ENCODE measurements at regions of chr20 and their contacts with region 1.

Region 1: GRCh38 chr20:58433764-58434163 is 44.7 kb downstream of the VAPB start:
- DNase-seq: no peak
- H3K4me3 Mint-ChIP-seq: no peak overlapping the region
- H3K27ac Mint-ChIP-seq: no peak overlapping the region
- H3K4me1 Mint-ChIP-seq: peaks cover 59% of the 10 kb centered on the region
- H3K27me3 Mint-ChIP-seq: no peaks in the 10 kb centered on the region
- CTCF ChIP-seq: no peak

Region 2: DNA sequence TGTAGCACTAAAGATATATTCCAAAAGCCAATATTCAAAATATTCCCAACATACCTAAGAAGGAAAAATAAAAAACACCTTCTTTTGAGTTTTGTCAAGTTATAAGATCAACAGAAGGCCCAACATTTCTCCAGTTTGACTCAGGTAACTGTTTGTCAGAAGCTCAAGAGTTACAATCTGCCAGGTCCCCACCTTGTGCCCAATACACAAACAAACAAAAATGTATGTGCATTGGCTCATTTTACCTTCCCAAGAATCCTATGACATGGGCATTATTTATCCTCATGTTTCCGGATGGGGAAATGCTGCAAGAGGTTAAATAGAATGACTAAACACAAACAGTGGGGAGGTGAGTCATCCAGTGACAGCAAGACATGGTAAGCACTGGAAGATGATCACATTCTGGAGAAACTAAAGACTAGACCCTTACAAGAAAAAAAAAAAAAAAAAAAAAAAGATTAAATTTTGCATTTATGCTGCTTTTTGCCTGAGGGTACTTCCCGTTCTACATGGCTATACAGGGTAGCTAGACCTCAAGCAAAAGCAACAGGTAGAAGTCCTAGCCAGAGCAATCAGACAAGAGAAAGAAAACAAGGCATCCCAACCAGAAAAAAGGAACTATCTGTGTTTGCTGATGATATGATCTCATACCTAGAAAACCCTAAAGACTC is 181.7 kb before region 1 on chr20:
- CTCF ChIA-PET with region 1: interaction called, 7 read pairs
- intact Hi-C with region 1: loop called (anchors 10 kb)
- DNase-seq: peak; percentile 58
- H3K4me3 Mint-ChIP-seq: no peak overlapping the region
- H3K27ac Mint-ChIP-seq: peak overlapping the region; percentile 76
- H3K4me1 Mint-ChIP-seq: peaks cover 29% of the 10 kb centered on the region
- H3K27me3 Mint-ChIP-seq: no peaks in the 10 kb centered on the region
- CTCF ChIP-seq: no peak

Region 3: GRCh38 chr20:58306421-58307276 is 127.1 kb before region 1 on chr20:
- CTCF ChIA-PET with region 1: no interaction called
- intact Hi-C with region 1: loop called (anchors 1 kb)
- DNase-seq: peak; percentile 77
- H3K4me3 Mint-ChIP-seq: peak overlapping the region; percentile 91
- H3K27ac Mint-ChIP-seq: peak overlapping the region; percentile 68
- H3K4me1 Mint-ChIP-seq: peaks cover 21% of the 10 kb centered on the region
- H3K27me3 Mint-ChIP-seq: no peaks in the 10 kb centered on the region
- CTCF ChIP-seq: no peak

Region 4: GRCh38 chr20:58518387-58518786 is 84.6 kb after region 1 on chr20:
- CTCF ChIA-PET with region 1: no interaction called
- intact Hi-C with region 1: no loop called
- DNase-seq: no peak
- H3K4me3 Mint-ChIP-seq: no peak overlapping the region
- H3K27ac Mint-ChIP-seq: no peak overlapping the region
- H3K4me1 Mint-ChIP-seq: peaks cover 15% of the 10 kb centered on the region
- H3K27me3 Mint-ChIP-seq: peaks cover 83% of the 10 kb centered on the region
- CTCF ChIP-seq: no peak

Region 5: GRCh38 chr20:58555078-58555765 is 121.5 kb after region 1 on chr20:
- CTCF ChIA-PET with region 1: no interaction called
- intact Hi-C with region 1: no loop called
- DNase-seq: no peak
- H3K4me3 Mint-ChIP-seq: no peak overlapping the region
- H3K27ac Mint-ChIP-seq: no peak overlapping the region
- H3K4me1 Mint-ChIP-seq: no peaks in the 10 kb centered on the region
- H3K27me3 Mint-ChIP-seq: peaks cover 88% of the 10 kb centered on the region
- CTCF ChIP-seq: no peak

Region 6: DNA sequence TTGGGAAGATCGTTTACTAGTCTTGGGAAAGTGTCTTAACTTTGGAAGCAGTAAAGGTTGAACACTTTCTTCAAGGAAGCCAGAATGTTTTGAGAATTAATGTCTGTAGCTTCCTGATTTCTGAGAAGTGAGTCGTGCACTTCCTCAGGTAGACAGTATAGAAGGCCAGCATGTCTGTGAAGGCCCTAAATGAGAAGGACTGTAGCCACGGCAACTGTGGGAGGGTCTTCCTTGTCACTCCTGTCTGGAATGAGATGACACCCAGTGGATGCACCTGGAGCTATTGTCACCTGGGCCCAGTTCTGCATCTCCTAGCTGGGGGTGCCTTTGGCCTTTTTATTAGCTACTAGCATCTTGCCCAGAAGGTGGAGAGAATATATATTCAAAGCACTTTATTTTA is 226.1 kb after region 1 on chr20:
- CTCF ChIA-PET with region 1: no interaction called
- intact Hi-C with region 1: loop called (anchors 5 kb)
- DNase-seq: no peak
- H3K4me3 Mint-ChIP-seq: no peak overlapping the region
- H3K27ac Mint-ChIP-seq: peak overlapping the region; percentile 48
- H3K4me1 Mint-ChIP-seq: peaks cover 29% of the 10 kb centered on the region
- H3K27me3 Mint-ChIP-seq: no peaks in the 10 kb centered on the region
- CTCF ChIP-seq: no peak

Measured in Calu3 (cell line).